MCF 10A (cell line): ENCODE measurements at regions of chr2 and their contacts with region 1.

Region 1: GRCh38 chr2:157735532-157735931 is 106.9 kb upstream of the ACVR1C start:
- DNase-seq: no peak
- H3K4me3 Mint-ChIP-seq: no peak overlapping the region
- H3K27ac Mint-ChIP-seq: no peak overlapping the region
- H3K4me1 Mint-ChIP-seq: no peaks in the 10 kb centered on the region
- H3K27me3 Mint-ChIP-seq: no peaks in the 10 kb centered on the region
- CTCF ChIP-seq: no peak

Region 2: DNA sequence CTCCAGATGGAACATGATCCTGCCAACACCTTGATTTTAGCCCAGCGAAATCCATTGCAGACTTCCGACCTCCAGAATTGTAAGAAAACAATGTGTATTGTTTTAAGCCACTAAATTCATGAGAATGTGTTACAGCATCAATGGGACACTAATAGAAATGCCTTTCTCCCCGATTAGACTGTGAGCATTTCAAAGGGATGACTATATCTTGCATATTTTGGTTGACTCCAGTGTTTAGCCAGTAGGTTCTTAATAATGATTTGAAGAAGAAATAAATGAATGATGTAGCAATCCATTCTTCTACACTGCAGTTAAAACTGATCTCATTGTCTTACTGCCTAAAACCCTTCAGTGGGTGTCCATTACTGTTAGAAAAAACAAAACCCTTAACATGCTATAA is 39.5 kb before region 1 on chr2:
- CTCF ChIA-PET with region 1: no interaction called
- POLR2A ChIA-PET with region 1: no interaction called
- intact Hi-C with region 1: loop called (anchors 5 kb)
- DNase-seq: no peak
- H3K4me3 Mint-ChIP-seq: no peak overlapping the region
- H3K27ac Mint-ChIP-seq: no peak overlapping the region
- H3K4me1 Mint-ChIP-seq: peaks cover 23% of the 10 kb centered on the region
- H3K27me3 Mint-ChIP-seq: no peaks in the 10 kb centered on the region
- CTCF ChIP-seq: no peak